Gastrocnemius medialis (tissue), 4 donors: ENCODE measurements at regions of chrX and their contacts with region 1.

Region 1: GRCh38 chrX:11758400-11759171 is 549 bp downstream of the MSL3 start:
- DNase-seq: peak; percentile 64 to 78
- ATAC-seq: peak; percentile 67 to 76
- H3K4me3 ChIP-seq: peak overlapping the region; percentile 71 to 82 (median 77)
- H3K27ac ChIP-seq: peak overlapping the region; percentile 83 to 92 (median 90)
- H3K4me1 ChIP-seq: peaks cover 0 to 3% of the 10 kb centered on the region in 2 donors
- H3K27me3 ChIP-seq: no peaks in the 10 kb centered on the region
- CTCF ChIP-seq: peak; percentile 23 to 91 (median 72)
- POLR2A ChIP-seq: no peak

Region 2: GRCh38 chrX:11143931-11144678 is 614.5 kb before region 1 on chrX:
- in situ Hi-C with region 1: loop called in 3 of 4 experiments (anchors 25 kb)
- intact Hi-C with region 1: no loop called
- DNase-seq: peak; percentile 5 to 22
- ATAC-seq: peak; percentile 58 to 89
- H3K4me3 ChIP-seq: no peak overlapping the region
- H3K27ac ChIP-seq: no peak overlapping the region
- H3K4me1 ChIP-seq: no peaks in the 10 kb centered on the region
- H3K27me3 ChIP-seq: no peaks in the 10 kb centered on the region
- CTCF ChIP-seq: peak; percentile 40 to 65 (median 59)
- POLR2A ChIP-seq: no peak

Region 3: GRCh38 chrX:11381464-11381863 is 377.1 kb before region 1 on chrX:
- in situ Hi-C with region 1: loop called in 1 of 4 experiments (anchors 25 kb)
- intact Hi-C with region 1: no loop called
- DNase-seq: peak; percentile 3 to 19
- ATAC-seq: peak; percentile 71 to 74
- H3K4me3 ChIP-seq: no peak overlapping the region
- H3K27ac ChIP-seq: no peak overlapping the region
- H3K4me1 ChIP-seq: no peaks in the 10 kb centered on the region
- H3K27me3 ChIP-seq: no peaks in the 10 kb centered on the region
- CTCF ChIP-seq: peak in 4 of 5 experiments; percentile 29 to 45 (median 44)
- POLR2A ChIP-seq: no peak

Region 4: GRCh38 chrX:11665144-11666111 is 93.2 kb before region 1 on chrX and contains the start of gene ARHGAP6:
- in situ Hi-C with region 1: no loop called
- intact Hi-C with region 1: loop called (anchors 5 kb)
- DNase-seq: peak; percentile 35 to 64
- ATAC-seq: peak; percentile 64 to 77
- H3K4me3 ChIP-seq: peak within 1 kb of the TSS; percentile 61 to 75 (median 70)
- H3K27ac ChIP-seq: peak within 1 kb of the TSS; percentile 76 to 82 (median 80)
- H3K4me1 ChIP-seq: no peaks in the 10 kb centered on the region
- H3K27me3 ChIP-seq: no peaks in the 10 kb centered on the region
- CTCF ChIP-seq: no peak
- POLR2A ChIP-seq: peak; percentile 14 to 18
- total RNA-seq, gene ARHGAP6: 10.7 to 18.0 (median 14.9) TPM

Region 5: GRCh38 chrX:11724122-11725017 is 34.2 kb before region 1 on chrX:
- in situ Hi-C with region 1: no loop called
- intact Hi-C with region 1: loop called (anchors 2 kb)
- DNase-seq: no peak
- ATAC-seq: peak; percentile 47 to 56
- H3K4me3 ChIP-seq: peak overlapping the region in 1 of 4 donors; percentile 16
- H3K27ac ChIP-seq: no peak overlapping the region
- H3K4me1 ChIP-seq: peaks cover 0 to 3% of the 10 kb centered on the region in 2 donors
- H3K27me3 ChIP-seq: no peaks in the 10 kb centered on the region
- CTCF ChIP-seq: peak; percentile 61 to 67 (median 66)
- POLR2A ChIP-seq: no peak